ENCODE measurements at regions of chr9 and their contacts with region 1.

Region 1: GRCh38 chr9:133459476-133460404 is at the start of gene CACFD1:
- DNase-seq: peak; percentile 97 to 99
- H3K4me3 ChIP-seq: peak within 1 kb of the TSS; percentile 70
- H3K4me3 Mint-ChIP-seq: peak within 1 kb of the TSS; percentile 78
- H3K27ac Mint-ChIP-seq: peak within 1 kb of the TSS; percentile 77
- H3K4me1 ChIP-seq: peaks cover 12% of the 10 kb centered on the region
- H3K4me1 Mint-ChIP-seq: no peaks in the 10 kb centered on the region
- H3K27me3 ChIP-seq: no peaks in the 10 kb centered on the region
- H3K27me3 Mint-ChIP-seq: no peaks in the 10 kb centered on the region
- CTCF ChIP-seq: no peak
- total RNA-seq, gene CACFD1: 26.0 and 27.0 TPM in 2 replicates

Region 2: GRCh38 chr9:133347985-133348717 is 111.6 kb before region 1 on chr9 and contains the starts of genes MED22 and RPL7A:
- CTCF ChIA-PET with region 1: interaction called, 7 read pairs
- POLR2A ChIA-PET with region 1: interaction called, 19 read pairs
- intact Hi-C with region 1: no loop called
- DNase-seq: peak; percentile 92 to 97
- H3K4me3 ChIP-seq: peak within 1 kb of the TSS; percentile 85
- H3K4me3 Mint-ChIP-seq: peak within 1 kb of the TSS; percentile 90
- H3K27ac Mint-ChIP-seq: peak within 1 kb of the TSS; percentile 98
- H3K4me1 ChIP-seq: peaks cover 10% of the 10 kb centered on the region
- H3K4me1 Mint-ChIP-seq: peaks cover 13% of the 10 kb centered on the region
- H3K27me3 ChIP-seq: no peaks in the 10 kb centered on the region
- H3K27me3 Mint-ChIP-seq: no peaks in the 10 kb centered on the region
- CTCF ChIP-seq: no peak
- total RNA-seq, gene MED22: 60.1 and 65.6 TPM in 2 replicates
- total RNA-seq, gene RPL7A: 1,995 and 2,182 TPM in 2 replicates

Region 3: DNA sequence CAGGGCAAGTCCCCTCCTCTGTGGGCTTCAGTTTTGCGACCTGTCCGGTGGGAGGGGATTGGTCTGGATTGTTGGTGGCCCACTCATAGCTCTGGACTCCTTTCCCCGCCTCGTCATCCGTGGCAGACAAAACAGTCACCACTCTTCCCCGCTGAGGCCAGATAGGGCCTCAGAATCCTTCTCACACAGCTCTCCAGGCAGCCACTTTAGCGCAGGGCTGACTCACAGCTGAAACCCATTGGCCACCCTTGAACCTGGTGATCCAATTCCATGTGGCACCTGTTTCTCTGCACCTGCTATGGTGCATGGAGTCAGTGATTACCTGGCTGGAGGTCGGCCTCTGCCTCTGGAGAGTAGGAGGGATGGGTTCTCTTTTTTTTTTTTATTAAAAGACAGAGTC is 15.8 kb before region 1 on chr9:
- CTCF ChIA-PET with region 1: interaction called, 22 read pairs
- POLR2A ChIA-PET with region 1: interaction called, 8 read pairs
- intact Hi-C with region 1: no loop called
- DNase-seq: no peak
- H3K4me3 ChIP-seq: no peak overlapping the region
- H3K4me3 Mint-ChIP-seq: no peak overlapping the region
- H3K27ac Mint-ChIP-seq: no peak overlapping the region
- H3K4me1 ChIP-seq: no peaks in the 10 kb centered on the region
- H3K4me1 Mint-ChIP-seq: no peaks in the 10 kb centered on the region
- H3K27me3 ChIP-seq: no peaks in the 10 kb centered on the region
- H3K27me3 Mint-ChIP-seq: peaks cover 4% of the 10 kb centered on the region
- CTCF ChIP-seq: no peak

Region 4: GRCh38 chr9:133485361-133486260 is 25.9 kb after region 1 on chr9:
- CTCF ChIA-PET with region 1: interaction called, 18 read pairs
- POLR2A ChIA-PET with region 1: interaction called, 4 read pairs
- intact Hi-C with region 1: loop called (anchors 1 kb)
- DNase-seq: no peak
- H3K4me3 ChIP-seq: no peak overlapping the region
- H3K4me3 Mint-ChIP-seq: no peak overlapping the region
- H3K27ac Mint-ChIP-seq: no peak overlapping the region
- H3K4me1 ChIP-seq: peaks cover 11% of the 10 kb centered on the region; the same call in 1 of the 2 replicates
- H3K4me1 Mint-ChIP-seq: peaks cover 7% of the 10 kb centered on the region
- H3K27me3 ChIP-seq: no peaks in the 10 kb centered on the region
- H3K27me3 Mint-ChIP-seq: peaks cover 3% of the 10 kb centered on the region
- CTCF ChIP-seq: no peak

Region 5: DNA sequence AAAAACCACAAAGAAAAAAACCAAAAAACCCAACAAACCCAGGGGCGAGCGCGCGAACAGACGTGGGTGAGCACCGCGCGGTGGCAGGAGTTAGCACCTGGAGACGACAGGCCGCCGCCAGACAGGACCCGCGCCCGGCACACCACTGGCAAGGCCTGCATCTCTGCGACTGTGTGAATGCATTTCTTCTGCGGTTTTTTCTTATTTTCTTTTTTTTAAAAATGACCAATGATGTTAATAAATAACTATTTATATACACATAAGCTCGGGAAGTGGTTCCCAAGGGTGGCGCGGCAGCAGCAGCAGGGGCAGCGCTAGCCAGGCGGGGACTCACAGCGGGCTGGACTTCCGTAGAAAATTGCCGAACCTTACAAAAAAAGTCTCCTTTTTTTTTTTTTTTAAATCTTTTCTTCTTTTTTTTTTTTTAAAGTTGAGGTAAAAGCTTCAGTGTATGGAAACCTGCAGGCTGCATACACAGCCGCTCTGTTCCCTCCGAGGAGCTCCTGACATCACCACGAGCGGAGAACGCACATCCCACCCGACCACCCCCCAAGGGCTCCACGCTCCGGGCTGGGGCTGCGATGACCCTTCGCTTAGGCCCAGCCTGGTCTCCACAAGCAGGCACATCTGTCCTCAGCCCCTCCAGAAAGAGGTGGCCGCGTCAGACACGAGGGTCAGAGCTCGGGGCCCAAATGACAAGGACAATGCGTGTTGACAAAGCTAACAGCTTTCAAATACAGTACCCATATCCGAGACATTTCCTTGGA is 572.9 kb after region 1 on chr9:
- CTCF ChIA-PET with region 1: no interaction called
- POLR2A ChIA-PET with region 1: interaction called, 16 read pairs
- intact Hi-C with region 1: no loop called
- DNase-seq: no peak
- H3K4me3 ChIP-seq: no peak overlapping the region
- H3K4me3 Mint-ChIP-seq: no peak overlapping the region
- H3K27ac Mint-ChIP-seq: no peak overlapping the region
- H3K4me1 ChIP-seq: no peaks in the 10 kb centered on the region
- H3K4me1 Mint-ChIP-seq: no peaks in the 10 kb centered on the region
- H3K27me3 ChIP-seq: no peaks in the 10 kb centered on the region
- H3K27me3 Mint-ChIP-seq: no peaks in the 10 kb centered on the region
- CTCF ChIP-seq: no peak